SK-N-SH (cell line): ENCODE measurements at regions of chr15 and their contacts with region 1.

Region 1: GRCh38 chr15:74781431-74782258 is at the start of gene CSK:
- DNase-seq: peak; percentile 99
- H3K4me3 ChIP-seq: peak within 1 kb of the TSS; percentile 85 to 97
- H3K27ac ChIP-seq: peak within 1 kb of the TSS in 1 of 2 experiments; percentile 76; a peak in 2 of 4 replicates
- H3K4me1 ChIP-seq: peaks cover 10 to 46% of the 10 kb centered on the region in 2 experiments; a peak in 2 of 4 replicates
- H3K27me3 ChIP-seq: no peaks in the 10 kb centered on the region
- CTCF ChIP-seq: peak; percentile 48
- EP300 ChIP-seq: no peak
- RAD21 ChIP-seq: no peak
- polyA plus RNA-seq, gene CSK: 34.7 and 53.1 TPM in 2 replicates

Region 2: GRCh38 chr15:74793135-74794028 is 11.7 kb after region 1 on chr15:
- CTCF ChIA-PET with region 1: interaction called, 40 read pairs
- POLR2A ChIA-PET with region 1: no interaction called
- DNase-seq: no peak
- H3K4me3 ChIP-seq: no peak overlapping the region
- H3K27ac ChIP-seq: no peak overlapping the region; a peak in 1 of 4 replicates
- H3K4me1 ChIP-seq: peaks cover 13 to 43% of the 10 kb centered on the region in 2 experiments
- H3K27me3 ChIP-seq: no peaks in the 10 kb centered on the region
- CTCF ChIP-seq: no peak; the same call in 1 of the 2 replicates
- EP300 ChIP-seq: no peak
- RAD21 ChIP-seq: no peak

Region 3: GRCh38 chr15:74808073-74808755 is 26.6 kb after region 1 on chr15:
- CTCF ChIA-PET with region 1: interaction called, 11 read pairs
- POLR2A ChIA-PET with region 1: no interaction called
- DNase-seq: no peak
- H3K4me3 ChIP-seq: no peak overlapping the region
- H3K27ac ChIP-seq: no peak overlapping the region
- H3K4me1 ChIP-seq: no peaks in the 10 kb centered on the region
- H3K27me3 ChIP-seq: no peaks in the 10 kb centered on the region
- CTCF ChIP-seq: no peak
- EP300 ChIP-seq: no peak
- RAD21 ChIP-seq: no peak

Region 4: DNA sequence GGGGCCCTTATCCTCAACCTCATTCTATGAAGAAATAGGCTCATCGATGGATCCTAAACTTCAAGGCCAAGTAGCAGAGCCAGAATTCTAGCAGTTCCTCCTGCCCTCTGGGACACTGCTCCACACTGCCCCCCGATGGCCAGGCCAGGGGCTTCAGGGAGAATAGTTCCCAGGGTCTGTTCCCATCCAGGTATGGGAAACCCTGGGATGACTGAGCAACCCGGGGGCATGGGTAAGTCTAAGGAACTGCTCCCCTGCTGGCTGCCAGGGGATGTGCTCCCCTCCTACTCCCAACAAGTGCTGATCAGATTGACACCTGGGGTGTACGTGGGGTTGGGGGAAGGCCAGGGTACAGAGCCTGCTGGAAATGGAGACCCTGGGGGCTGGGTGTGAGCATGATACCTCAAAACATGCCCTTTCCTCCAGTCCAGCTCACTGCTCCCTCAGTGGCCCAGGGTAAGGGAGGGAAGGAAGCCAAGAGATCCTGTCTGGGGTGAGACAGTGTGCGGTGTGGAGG is 53.7 kb after region 1 on chr15:
- CTCF ChIA-PET with region 1: interaction called, 15 read pairs
- POLR2A ChIA-PET with region 1: no interaction called
- DNase-seq: peak; percentile 87
- H3K4me3 ChIP-seq: peak overlapping the region in 1 of 2 experiments; percentile 49; a peak in 1 of 4 replicates
- H3K27ac ChIP-seq: no peak overlapping the region; a peak in 1 of 4 replicates
- H3K4me1 ChIP-seq: peaks cover 0 to 16% of the 10 kb centered on the region in 2 experiments; a peak in 1 of 4 replicates
- H3K27me3 ChIP-seq: no peaks in the 10 kb centered on the region
- CTCF ChIP-seq: peak; percentile 74
- EP300 ChIP-seq: no peak
- RAD21 ChIP-seq: peak; percentile 64

Region 5: GRCh38 chr15:74950078-74951000 is 168.7 kb after region 1 on chr15:
- CTCF ChIA-PET with region 1: interaction called, 44 read pairs
- POLR2A ChIA-PET with region 1: interaction called, 6 read pairs
- DNase-seq: peak; percentile 67
- H3K4me3 ChIP-seq: no peak overlapping the region; a peak in 1 of 4 replicates
- H3K27ac ChIP-seq: no peak overlapping the region; a peak in 1 of 4 replicates
- H3K4me1 ChIP-seq: peaks cover 0 to 18% of the 10 kb centered on the region in 2 experiments; a peak in 1 of 4 replicates
- H3K27me3 ChIP-seq: no peaks in the 10 kb centered on the region
- CTCF ChIP-seq: peak; percentile 98
- EP300 ChIP-seq: 0 out of 4 replicates have a peak, but pooled peaks of 1 of the 2 experiments have one; percentile 10
- RAD21 ChIP-seq: peak; percentile 96